Right ventricle myocardium inferior (tissue), 1 donor: ENCODE measurements at regions of chr3 and their contacts with region 1.

Region 1: DNA sequence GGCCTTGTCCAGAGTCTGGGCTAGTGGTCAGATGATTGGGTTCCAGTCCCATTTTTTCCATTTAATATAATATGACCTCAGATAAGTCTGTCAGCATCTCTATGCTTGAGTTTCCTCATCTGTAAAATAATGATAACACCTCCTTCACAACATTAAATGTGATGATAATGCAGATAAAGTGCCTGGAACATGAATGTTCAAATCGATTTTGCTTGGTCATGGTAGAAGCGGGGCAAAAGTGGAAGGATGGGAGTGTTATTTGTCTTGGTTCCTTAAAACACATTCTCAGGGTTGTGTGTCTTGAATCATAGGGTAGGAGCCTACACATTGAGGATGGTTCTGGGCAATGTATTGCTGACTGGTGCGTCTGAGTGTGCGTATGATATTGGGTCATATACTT is 16.9 kb downstream of the ARIH2 start:
- DNase-seq: no peak
- ATAC-seq: no peak

Region 2: GRCh38 chr3:48952510-48953118 is 17.1 kb after region 1 on chr3:
- intact Hi-C with region 1: loop called (anchors 2 kb)
- DNase-seq: no peak
- ATAC-seq: no peak